ENCODE measurements at regions of chr7 and their contacts with region 1.

Region 1: GRCh38 chr7:35801392-35802101 is 690 bp downstream of the SEPTIN7 start:
- DNase-seq: peak; percentile 56 to 91 (median 72)
- ATAC-seq: peak; percentile 35
- H3K4me3 ChIP-seq: peak overlapping the region; percentile 84
- H3K4me3 Mint-ChIP-seq: peak overlapping the region; percentile 94
- H3K27ac ChIP-seq: peak overlapping the region; percentile 94 to 99
- H3K27ac Mint-ChIP-seq: peak overlapping the region; percentile 98
- H3K4me1 ChIP-seq: peaks cover 21% of the 10 kb centered on the region
- H3K4me1 Mint-ChIP-seq: peaks cover 55% of the 10 kb centered on the region
- H3K27me3 ChIP-seq: no peaks in the 10 kb centered on the region
- H3K27me3 Mint-ChIP-seq: no peaks in the 10 kb centered on the region
- CTCF ChIP-seq: peak; percentile 41

Region 2: GRCh38 chr7:35037526-35038339 is 763.8 kb before region 1 on chr7:
- CTCF ChIA-PET with region 1: no interaction called
- POLR2A ChIA-PET with region 1: interaction called, 3 read pairs
- intact Hi-C with region 1: loop called in 1 of 2 experiments (anchors 10 kb)
- DNase-seq: peak; percentile 66 to 96 (median 86)
- ATAC-seq: peak; percentile 73
- H3K4me3 ChIP-seq: peak overlapping the region; percentile 49
- H3K4me3 Mint-ChIP-seq: peak overlapping the region; percentile 92
- H3K27ac ChIP-seq: no peak overlapping the region
- H3K27ac Mint-ChIP-seq: peak overlapping the region; percentile 34
- H3K4me1 ChIP-seq: peaks cover 21% of the 10 kb centered on the region
- H3K4me1 Mint-ChIP-seq: peaks cover 30% of the 10 kb centered on the region
- H3K27me3 ChIP-seq: no peaks in the 10 kb centered on the region
- H3K27me3 Mint-ChIP-seq: no peaks in the 10 kb centered on the region
- CTCF ChIP-seq: peak; percentile 73

Region 3: GRCh38 chr7:35714862-35715261 is 86.7 kb before region 1 on chr7:
- CTCF ChIA-PET with region 1: interaction called, 8 read pairs
- POLR2A ChIA-PET with region 1: interaction called, 50 read pairs
- intact Hi-C with region 1: loop called in 1 of 2 experiments (anchors 5 kb)
- DNase-seq: no peak
- ATAC-seq: no peak
- H3K4me3 ChIP-seq: no peak overlapping the region
- H3K4me3 Mint-ChIP-seq: no peak overlapping the region
- H3K27ac ChIP-seq: no peak overlapping the region
- H3K27ac Mint-ChIP-seq: no peak overlapping the region
- H3K4me1 ChIP-seq: peaks cover 4% of the 10 kb centered on the region
- H3K4me1 Mint-ChIP-seq: peaks cover 5% of the 10 kb centered on the region
- H3K27me3 ChIP-seq: no peaks in the 10 kb centered on the region
- H3K27me3 Mint-ChIP-seq: no peaks in the 10 kb centered on the region
- CTCF ChIP-seq: no peak

Region 4: GRCh38 chr7:35839860-35840854 is 38.6 kb after region 1 on chr7:
- CTCF ChIA-PET with region 1: no interaction called
- POLR2A ChIA-PET with region 1: interaction called, 10 read pairs
- intact Hi-C with region 1: loop called (anchors 5 kb)
- DNase-seq: no peak
- ATAC-seq: no peak
- H3K4me3 ChIP-seq: no peak overlapping the region
- H3K4me3 Mint-ChIP-seq: no peak overlapping the region
- H3K27ac ChIP-seq: no peak overlapping the region
- H3K27ac Mint-ChIP-seq: peak overlapping the region; percentile 42
- H3K4me1 ChIP-seq: peaks cover 3% of the 10 kb centered on the region
- H3K4me1 Mint-ChIP-seq: peaks cover 66% of the 10 kb centered on the region
- H3K27me3 ChIP-seq: no peaks in the 10 kb centered on the region
- H3K27me3 Mint-ChIP-seq: no peaks in the 10 kb centered on the region
- CTCF ChIP-seq: no peak

Region 5: DNA sequence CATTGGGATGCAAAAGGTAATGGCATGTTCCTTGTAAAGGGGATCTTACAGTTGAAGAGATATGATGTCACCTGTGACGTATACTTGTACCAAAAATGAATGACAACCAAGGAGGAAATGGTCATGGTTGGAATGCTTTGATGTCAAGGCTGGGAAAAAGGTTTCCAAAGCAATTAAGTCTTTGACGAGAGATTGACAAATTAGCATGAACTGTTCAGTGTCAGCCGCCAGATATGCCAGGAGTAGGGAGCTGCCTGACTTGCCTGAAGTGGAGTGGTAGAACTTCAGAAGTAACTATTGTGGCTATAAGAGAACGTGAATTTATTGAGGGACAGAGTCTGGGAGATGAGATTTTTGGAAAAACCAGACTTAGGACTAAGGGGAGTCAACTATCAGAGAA is 87.5 kb after region 1 on chr7:
- CTCF ChIA-PET with region 1: no interaction called
- POLR2A ChIA-PET with region 1: interaction called, 7 read pairs
- intact Hi-C with region 1: loop called in 1 of 2 experiments (anchors 5 kb)
- DNase-seq: no peak
- ATAC-seq: no peak
- H3K4me3 ChIP-seq: no peak overlapping the region
- H3K4me3 Mint-ChIP-seq: no peak overlapping the region
- H3K27ac ChIP-seq: no peak overlapping the region
- H3K27ac Mint-ChIP-seq: peak overlapping the region; percentile 49
- H3K4me1 ChIP-seq: no peaks in the 10 kb centered on the region
- H3K4me1 Mint-ChIP-seq: peaks cover 37% of the 10 kb centered on the region
- H3K27me3 ChIP-seq: no peaks in the 10 kb centered on the region
- H3K27me3 Mint-ChIP-seq: no peaks in the 10 kb centered on the region
- CTCF ChIP-seq: no peak

Region 6: DNA sequence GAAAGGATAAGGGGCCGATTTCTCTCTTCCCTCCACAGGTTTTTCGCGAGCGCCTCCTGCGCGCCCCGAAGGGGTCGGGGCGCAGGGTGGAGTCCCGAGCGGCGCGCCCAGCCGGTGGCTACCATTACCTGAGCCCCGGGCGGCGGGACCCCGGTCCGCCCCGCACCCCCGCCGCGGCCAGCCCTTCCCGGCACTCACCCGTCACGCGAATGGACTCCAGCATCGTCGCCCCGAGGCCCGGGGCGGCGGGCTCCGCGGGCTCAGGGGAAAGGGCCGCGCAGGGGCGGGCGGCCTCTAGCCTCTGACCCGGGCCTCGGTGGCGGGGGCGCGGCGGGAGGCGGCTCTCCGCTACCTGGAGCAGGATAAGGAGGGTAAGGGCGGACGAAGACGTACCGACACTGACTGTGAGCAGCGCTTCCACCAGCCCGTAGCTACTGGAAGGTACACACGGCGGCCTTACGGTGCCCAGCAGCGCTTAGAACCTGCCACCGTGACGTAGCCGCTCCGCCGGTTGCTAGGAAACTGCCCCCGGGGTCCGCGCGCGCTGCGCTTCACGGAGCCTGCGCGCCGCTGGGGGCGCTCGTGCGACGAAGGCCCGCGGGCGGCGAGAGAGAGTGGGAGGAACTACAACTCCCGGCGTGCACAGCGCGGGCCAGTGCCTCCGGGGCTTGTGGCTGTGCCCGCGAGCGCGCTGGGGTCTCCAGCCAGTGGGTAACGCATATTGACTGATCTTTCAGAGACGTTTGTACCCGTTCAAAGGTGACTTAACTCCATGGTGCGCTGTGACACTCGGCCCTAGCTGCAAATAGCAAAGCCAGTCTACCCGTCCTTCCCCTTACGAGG is 565.4 kb after region 1 on chr7:
- CTCF ChIA-PET with region 1: no interaction called
- POLR2A ChIA-PET with region 1: interaction called, 3 read pairs
- intact Hi-C with region 1: loop called in 1 of 2 experiments (anchors 5 kb)
- DNase-seq: peak; percentile 84 to 97 (median 89)
- ATAC-seq: peak; percentile 96
- H3K4me3 ChIP-seq: peak overlapping the region; percentile 56
- H3K4me3 Mint-ChIP-seq: peak overlapping the region; percentile 92
- H3K27ac ChIP-seq: peak overlapping the region in 1 of 2 donors; percentile 40
- H3K27ac Mint-ChIP-seq: peak overlapping the region; percentile 64
- H3K4me1 ChIP-seq: peaks cover 6% of the 10 kb centered on the region
- H3K4me1 Mint-ChIP-seq: peaks cover 6% of the 10 kb centered on the region
- H3K27me3 ChIP-seq: no peaks in the 10 kb centered on the region
- H3K27me3 Mint-ChIP-seq: no peaks in the 10 kb centered on the region
- CTCF ChIP-seq: peak; percentile 96